CD8-positive, alpha-beta memory T cell (primary cell): ENCODE measurements at regions of chr7 and their contacts with region 1.

Region 1: GRCh38 chr7:24819916-24820689 is 62.8 kb upstream of the GSDME start:
- DNase-seq: peak; percentile 58 to 80 (median 67)
- H3K4me3 ChIP-seq: peak overlapping the region; percentile 37
- H3K4me3 Mint-ChIP-seq: peak overlapping the region; percentile 44 to 88 (median 84)
- H3K27ac ChIP-seq: peak overlapping the region; percentile 74
- H3K27ac Mint-ChIP-seq: peak overlapping the region; percentile 93 to 98 (median 96)
- H3K4me1 ChIP-seq: peaks cover 27% of the 10 kb centered on the region
- H3K4me1 Mint-ChIP-seq: peaks cover 45 to 57% (median 56%) of the 10 kb centered on the region in 3 donors
- H3K27me3 ChIP-seq: no peaks in the 10 kb centered on the region
- H3K27me3 Mint-ChIP-seq: no peaks in the 10 kb centered on the region

Region 2: GRCh38 chr7:24595671-24596418 is 224.3 kb before region 1 on chr7:
- CTCF ChIA-PET with region 1: no interaction called
- POLR2A ChIA-PET with region 1: no interaction called
- DNase-seq: peak in 1 of 5 donors; percentile 13
- H3K4me3 ChIP-seq: peak overlapping the region; percentile 52
- H3K4me3 Mint-ChIP-seq: no peak overlapping the region
- H3K27ac ChIP-seq: no peak overlapping the region
- H3K27ac Mint-ChIP-seq: no peak overlapping the region
- H3K4me1 ChIP-seq: no peaks in the 10 kb centered on the region
- H3K4me1 Mint-ChIP-seq: peaks cover 0 to 6% (median 0%) of the 10 kb centered on the region in 3 donors
- H3K27me3 ChIP-seq: no peaks in the 10 kb centered on the region
- H3K27me3 Mint-ChIP-seq: no peaks in the 10 kb centered on the region

Region 3: DNA sequence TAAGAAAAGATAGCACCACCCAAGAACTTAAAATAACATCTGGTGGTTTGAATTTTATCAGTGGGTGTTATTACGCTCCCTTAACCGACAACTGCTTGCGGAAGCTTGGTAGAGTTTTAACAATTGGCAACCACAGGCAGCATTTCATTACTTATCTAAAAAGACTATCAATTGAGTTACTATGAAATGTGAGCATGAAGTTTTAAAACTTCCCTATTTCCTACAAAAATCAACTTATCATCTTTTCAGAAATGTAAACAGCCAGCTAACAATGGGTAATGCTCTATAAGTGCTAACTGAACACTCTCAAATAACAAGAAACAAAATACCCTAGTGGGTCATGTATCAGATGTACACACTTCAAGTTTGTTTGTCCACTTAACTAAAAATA is 91.1 kb after region 1 on chr7:
- CTCF ChIA-PET with region 1: interaction called, 19 read pairs
- POLR2A ChIA-PET with region 1: interaction called, 5 read pairs
- DNase-seq: peak in 3 of 5 donors; percentile 35 to 51 (median 50)
- H3K4me3 ChIP-seq: peak overlapping the region; percentile 26
- H3K4me3 Mint-ChIP-seq: peak overlapping the region; percentile 38 to 81 (median 69)
- H3K27ac ChIP-seq: peak overlapping the region; percentile 10
- H3K27ac Mint-ChIP-seq: peak overlapping the region; percentile 62 to 97 (median 88)
- H3K4me1 ChIP-seq: peaks cover 76% of the 10 kb centered on the region
- H3K4me1 Mint-ChIP-seq: peaks cover 6 to 62% (median 53%) of the 10 kb centered on the region in 3 donors
- H3K27me3 ChIP-seq: no peaks in the 10 kb centered on the region
- H3K27me3 Mint-ChIP-seq: no peaks in the 10 kb centered on the region

Region 4: GRCh38 chr7:25028370-25029021 is 208.4 kb after region 1 on chr7:
- CTCF ChIA-PET with region 1: interaction called, 21 read pairs
- POLR2A ChIA-PET with region 1: interaction called, 4 read pairs
- DNase-seq: peak in 3 of 5 donors; percentile 25 to 55 (median 51)
- H3K4me3 ChIP-seq: peak overlapping the region; percentile 35
- H3K4me3 Mint-ChIP-seq: peak overlapping the region; percentile 3 to 73 (median 61)
- H3K27ac ChIP-seq: peak overlapping the region; percentile 32
- H3K27ac Mint-ChIP-seq: peak overlapping the region; percentile 76 to 98 (median 87)
- H3K4me1 ChIP-seq: peaks cover 28% of the 10 kb centered on the region
- H3K4me1 Mint-ChIP-seq: peaks cover 47 to 77% (median 76%) of the 10 kb centered on the region in 3 donors
- H3K27me3 ChIP-seq: no peaks in the 10 kb centered on the region
- H3K27me3 Mint-ChIP-seq: peaks cover 0 to 2% of the 10 kb centered on the region in 2 donors

Region 5: GRCh38 chr7:25075459-25075858 is 255.4 kb after region 1 on chr7:
- CTCF ChIA-PET with region 1: interaction called, 47 read pairs
- POLR2A ChIA-PET with region 1: interaction called, 18 read pairs
- DNase-seq: no peak
- H3K4me3 ChIP-seq: no peak overlapping the region
- H3K4me3 Mint-ChIP-seq: no peak overlapping the region
- H3K27ac ChIP-seq: no peak overlapping the region
- H3K27ac Mint-ChIP-seq: no peak overlapping the region
- H3K4me1 ChIP-seq: no peaks in the 10 kb centered on the region
- H3K4me1 Mint-ChIP-seq: no peaks in the 10 kb centered on the region
- H3K27me3 ChIP-seq: no peaks in the 10 kb centered on the region
- H3K27me3 Mint-ChIP-seq: peaks cover 3 to 4% of the 10 kb centered on the region in 2 donors

Region 6: GRCh38 chr7:25098096-25099046 is 278.3 kb after region 1 on chr7:
- CTCF ChIA-PET with region 1: interaction called, 209 read pairs
- POLR2A ChIA-PET with region 1: no interaction called
- DNase-seq: peak; percentile 39 to 73 (median 42)
- H3K4me3 ChIP-seq: no peak overlapping the region
- H3K4me3 Mint-ChIP-seq: no peak overlapping the region
- H3K27ac ChIP-seq: no peak overlapping the region
- H3K27ac Mint-ChIP-seq: no peak overlapping the region
- H3K4me1 ChIP-seq: no peaks in the 10 kb centered on the region
- H3K4me1 Mint-ChIP-seq: peaks cover 4 to 8% (median 6%) of the 10 kb centered on the region in 3 donors
- H3K27me3 ChIP-seq: peaks cover 3% of the 10 kb centered on the region
- H3K27me3 Mint-ChIP-seq: peaks cover 1 to 4% of the 10 kb centered on the region in 2 donors